Activated T-helper 1 cell treated with anti-CD3 and anti-CD28 coated beads, Interleukin-12 subunit alpha, Interleukin-12 subunit beta, Interleukin-2, Interleukin-4 antibody, amounts not matched to agents 30 ng/mL and 10 ng/mL and 1 ng/mL, durations not matched to agents 14 hours and 24 hours and 36 hours (primary cell): ENCODE measurements at regions of chr5 and their contacts with region 1.

Region 1: GRCh38 chr5:35617435-35618303 is at the start of gene SPEF2:
- DNase-seq: peak; percentile 71
- H3K4me3 Mint-ChIP-seq: peak within 1 kb of the TSS; percentile 92
- H3K27ac Mint-ChIP-seq: peak within 1 kb of the TSS; percentile 94
- H3K4me1 Mint-ChIP-seq: peaks cover 53% of the 10 kb centered on the region
- H3K27me3 Mint-ChIP-seq: no peaks in the 10 kb centered on the region
- total RNA-seq, gene SPEF2: 4.5 and 4.6 TPM in 2 replicates

Region 2: DNA sequence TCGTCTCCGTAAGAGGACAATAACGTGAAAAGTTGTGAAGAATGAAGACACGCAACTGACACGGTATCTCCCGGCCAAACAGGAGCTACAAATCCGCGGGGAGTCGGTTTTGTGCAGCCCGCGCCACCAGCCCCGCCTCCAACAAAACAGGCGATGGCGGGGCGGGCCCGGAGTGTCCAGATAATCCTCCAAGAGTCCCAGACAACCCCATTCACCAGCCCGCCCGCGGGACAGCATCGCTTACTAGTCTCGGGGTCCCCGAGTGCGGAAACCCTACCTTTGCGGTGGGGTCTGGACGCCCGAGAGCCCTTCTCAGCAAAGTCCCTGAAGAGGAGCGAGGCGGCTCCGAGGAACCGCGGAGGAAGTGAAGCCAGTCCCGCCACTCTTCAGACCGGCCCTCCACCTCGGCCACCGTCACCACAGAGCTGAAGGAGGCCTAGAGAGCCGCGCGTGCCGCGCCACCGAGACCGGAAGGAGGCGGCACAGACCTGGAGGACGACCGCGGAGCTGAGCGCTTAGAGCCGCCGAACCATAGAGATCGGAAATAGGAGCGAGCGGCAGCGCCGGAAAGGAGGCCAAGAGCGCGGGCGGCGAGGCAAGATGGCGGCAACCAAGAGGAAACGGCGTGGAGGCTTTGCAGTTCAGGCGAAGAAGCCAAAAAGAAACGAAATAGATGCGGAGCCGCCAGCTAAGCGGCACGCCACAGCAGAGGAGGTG is 702.4 kb before region 1 on chr5 and contains the starts of genes BRIX1 and RAD1:
- intact Hi-C with region 1: loop called (anchors 5 kb)
- DNase-seq: peak; percentile 94
- H3K4me3 Mint-ChIP-seq: no peak within 1 kb of the TSS
- H3K27ac Mint-ChIP-seq: peak within 1 kb of the TSS; percentile 74
- H3K4me1 Mint-ChIP-seq: peaks cover 35% of the 10 kb centered on the region
- H3K27me3 Mint-ChIP-seq: no peaks in the 10 kb centered on the region
- total RNA-seq, gene BRIX1: 110 TPM in 2 replicates
- total RNA-seq, gene RAD1: 45.7 and 47.1 TPM in 2 replicates

Region 3: DNA sequence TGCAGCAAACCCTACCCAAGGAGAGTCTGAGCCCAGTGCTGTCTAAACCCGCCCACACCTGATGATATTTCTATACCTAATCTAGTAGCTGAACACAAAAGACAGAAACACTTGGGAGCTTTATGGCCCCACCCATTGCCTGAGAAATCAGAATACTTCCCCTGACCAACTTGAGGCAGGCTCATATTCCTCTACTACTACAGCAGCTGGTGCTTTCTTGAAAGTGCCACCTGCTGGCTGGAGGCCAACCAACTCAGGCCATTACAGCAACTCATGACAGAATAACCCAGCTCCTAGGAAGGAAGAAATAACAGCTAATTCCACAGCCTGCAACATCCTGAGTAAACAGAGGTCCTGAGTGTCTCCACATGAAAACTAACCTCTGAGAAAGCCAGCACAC is 173.5 kb before region 1 on chr5:
- intact Hi-C with region 1: no loop called
- DNase-seq: no peak
- H3K4me3 Mint-ChIP-seq: no peak overlapping the region
- H3K27ac Mint-ChIP-seq: no peak overlapping the region
- H3K4me1 Mint-ChIP-seq: no peaks in the 10 kb centered on the region
- H3K27me3 Mint-ChIP-seq: peaks cover 16% of the 10 kb centered on the region

Region 4: GRCh38 chr5:35543408-35543807 is 74.3 kb before region 1 on chr5:
- intact Hi-C with region 1: no loop called
- DNase-seq: no peak
- H3K4me3 Mint-ChIP-seq: no peak overlapping the region
- H3K27ac Mint-ChIP-seq: no peak overlapping the region
- H3K4me1 Mint-ChIP-seq: peaks cover 7% of the 10 kb centered on the region
- H3K27me3 Mint-ChIP-seq: peaks cover 5% of the 10 kb centered on the region

Region 5: DNA sequence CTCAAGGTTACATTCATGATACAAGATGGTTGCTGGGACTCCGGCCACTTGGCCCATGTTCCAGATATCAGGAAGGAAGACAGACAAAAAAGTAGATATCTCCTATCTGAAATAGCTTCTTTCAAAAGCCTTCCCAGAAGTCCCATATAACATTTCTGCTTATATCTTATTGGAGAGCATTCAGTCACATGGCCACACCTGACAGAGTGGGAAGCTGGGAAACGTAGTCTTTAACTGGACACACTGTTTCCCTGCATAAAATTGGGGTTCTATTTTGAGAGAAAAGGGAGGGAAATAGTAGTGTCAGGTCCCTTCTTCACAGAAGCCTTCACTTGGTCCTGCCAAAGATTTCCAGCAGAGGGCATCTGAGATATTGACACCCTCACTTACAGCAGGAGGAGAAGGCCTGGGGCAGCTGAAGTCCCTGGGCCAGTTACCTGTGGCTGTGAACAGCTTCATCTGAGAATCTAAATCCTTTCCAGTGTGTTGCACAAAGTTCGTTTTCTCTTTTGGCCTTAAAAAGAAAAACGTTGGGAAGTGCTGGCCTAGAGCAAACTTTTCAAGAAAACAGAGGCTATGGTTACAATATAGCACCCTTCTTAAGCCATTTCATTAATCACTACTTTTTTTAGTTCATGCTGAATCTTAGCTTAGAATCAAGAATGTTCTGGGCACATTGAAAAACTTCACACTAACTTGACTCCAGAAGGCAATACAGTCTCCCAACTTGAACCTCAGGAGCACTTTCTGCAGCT is 33.5 kb after region 1 on chr5:
- intact Hi-C with region 1: loop called (anchors 2 kb)
- DNase-seq: peak; percentile 50
- H3K4me3 Mint-ChIP-seq: no peak overlapping the region
- H3K27ac Mint-ChIP-seq: no peak overlapping the region
- H3K4me1 Mint-ChIP-seq: peaks cover 5% of the 10 kb centered on the region
- H3K27me3 Mint-ChIP-seq: no peaks in the 10 kb centered on the region

Region 6: GRCh38 chr5:35785601-35786085 is 168.0 kb after region 1 on chr5:
- intact Hi-C with region 1: loop called (anchors 2 kb)
- DNase-seq: peak; percentile 30
- H3K4me3 Mint-ChIP-seq: peak overlapping the region; percentile 24
- H3K27ac Mint-ChIP-seq: peak overlapping the region; percentile 86
- H3K4me1 Mint-ChIP-seq: peaks cover 90% of the 10 kb centered on the region
- H3K27me3 Mint-ChIP-seq: no peaks in the 10 kb centered on the region

Region 7: DNA sequence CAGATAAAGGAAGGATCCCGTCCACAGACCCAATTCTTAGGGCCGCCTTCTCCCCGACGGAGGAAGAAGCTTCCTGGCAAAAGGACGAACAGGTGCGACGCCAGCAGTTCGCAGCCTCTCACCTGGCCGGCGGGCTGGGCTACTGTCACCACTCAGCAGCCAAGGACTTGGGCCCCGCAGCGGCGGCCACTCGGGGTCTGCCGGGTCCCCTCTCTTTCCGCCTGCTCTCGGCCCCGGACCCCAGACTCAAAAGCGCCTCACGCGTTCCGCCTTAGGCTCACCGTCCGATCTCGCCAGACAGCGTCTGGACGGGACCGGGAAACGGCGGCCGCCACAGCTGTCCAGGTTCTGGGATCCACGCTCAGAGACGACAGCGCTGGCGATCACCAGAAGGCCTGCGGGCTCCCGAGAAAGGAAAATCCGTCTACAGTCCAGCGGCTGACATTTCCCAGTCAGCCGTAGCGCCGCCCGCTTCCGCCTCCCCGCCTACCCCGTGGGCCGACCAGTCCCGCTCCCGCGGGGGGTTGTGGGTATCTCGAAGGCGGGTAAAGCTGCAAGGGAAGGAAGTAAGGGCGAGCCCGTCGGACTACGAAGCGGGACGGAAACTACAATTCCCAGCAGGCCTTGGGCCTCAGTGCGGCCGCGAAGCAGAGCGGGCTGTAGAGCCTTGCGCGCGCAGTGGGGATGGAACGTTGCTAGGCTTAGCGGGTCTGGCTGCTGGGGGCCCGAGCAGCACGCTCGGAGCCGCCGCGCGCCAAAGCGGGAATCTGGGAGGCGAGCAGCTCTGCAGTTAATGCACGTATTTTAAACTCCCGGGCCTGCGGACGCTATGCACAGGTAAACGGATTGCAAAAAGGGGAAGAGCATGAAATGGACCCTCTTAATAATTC is 534.0 kb after region 1 on chr5 and contains the starts of genes LMBRD2 and SKP2:
- intact Hi-C with region 1: loop called (anchors 2 kb)
- DNase-seq: peak; percentile 97
- H3K4me3 Mint-ChIP-seq: peak within 1 kb of the TSS; percentile 97
- H3K27ac Mint-ChIP-seq: peak within 1 kb of the TSS; percentile 79
- H3K4me1 Mint-ChIP-seq: peaks cover 59% of the 10 kb centered on the region
- H3K27me3 Mint-ChIP-seq: no peaks in the 10 kb centered on the region
- total RNA-seq, gene LMBRD2: 8.9 and 12.3 TPM in 2 replicates
- total RNA-seq, gene SKP2: 54.6 and 61.2 TPM in 2 replicates